CD14-positive monocyte (primary cell): ENCODE measurements at regions of chr7 and their contacts with region 1.

Region 1: DNA sequence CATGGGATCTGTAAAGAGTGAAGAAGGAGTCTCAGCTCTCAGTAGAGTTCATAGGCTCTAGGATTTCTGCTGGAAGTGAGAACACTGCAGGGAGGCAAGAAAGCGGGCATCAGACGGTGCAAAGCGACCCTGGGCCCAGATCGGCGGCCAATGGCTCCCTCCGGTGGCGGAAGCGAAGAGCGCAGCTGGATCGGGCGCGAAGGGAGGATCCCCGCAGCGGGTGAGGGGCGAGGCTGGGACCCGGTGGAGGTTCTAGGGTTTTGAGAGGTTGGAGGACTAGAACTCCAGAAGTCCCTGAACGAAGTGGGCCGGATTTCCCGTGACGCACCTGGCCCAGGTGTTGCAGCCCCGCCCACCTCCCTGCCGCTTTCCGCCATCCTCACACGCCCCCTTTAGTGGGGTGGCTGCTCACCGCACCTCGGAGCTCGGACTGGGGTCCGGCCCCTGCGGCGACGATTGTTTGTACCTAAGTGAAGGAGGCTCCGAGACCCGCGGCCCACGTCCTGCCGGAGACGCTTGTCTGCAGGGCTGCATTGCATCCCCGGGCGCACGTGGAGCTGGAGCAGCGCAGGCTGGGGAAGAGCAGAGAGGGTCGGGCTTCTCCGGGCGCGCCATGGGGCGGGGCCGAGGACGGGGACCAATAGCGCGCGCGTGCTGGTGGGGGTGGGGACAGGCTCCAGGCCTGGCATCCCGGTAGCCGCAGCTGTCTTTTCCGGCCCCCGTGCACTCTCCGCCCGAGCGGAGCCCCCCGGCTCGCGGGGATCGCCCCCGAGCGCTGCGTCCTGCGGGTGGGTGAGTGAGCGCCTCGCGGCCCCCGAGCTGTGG is at the start of gene SLC12A9:
- DNase-seq: peak; percentile 58 to 79 (median 64)
- H3K4me3 ChIP-seq: peak within 1 kb of the TSS; percentile 53 to 99 (median 69)
- H3K4me3 Mint-ChIP-seq: peak within 1 kb of the TSS; percentile 94 to 96
- H3K27ac ChIP-seq: peak within 1 kb of the TSS; percentile 48 to 84
- H3K27ac Mint-ChIP-seq: peak within 1 kb of the TSS; percentile 85 to 94 (median 92)
- H3K4me1 ChIP-seq: peaks cover 25 to 41% of the 10 kb centered on the region in 2 donors
- H3K4me1 Mint-ChIP-seq: peaks cover 38% of the 10 kb centered on the region
- H3K27me3 ChIP-seq: peaks cover 0 to 2% of the 10 kb centered on the region in 2 donors
- H3K27me3 Mint-ChIP-seq: peaks cover 0 to 3% (median 0%) of the 10 kb centered on the region in 3 donors
- CTCF ChIP-seq: peak; percentile 96
- polyA plus RNA-seq, gene SLC12A9: 18.8 to 119 (median 19.3) TPM

Region 2: DNA sequence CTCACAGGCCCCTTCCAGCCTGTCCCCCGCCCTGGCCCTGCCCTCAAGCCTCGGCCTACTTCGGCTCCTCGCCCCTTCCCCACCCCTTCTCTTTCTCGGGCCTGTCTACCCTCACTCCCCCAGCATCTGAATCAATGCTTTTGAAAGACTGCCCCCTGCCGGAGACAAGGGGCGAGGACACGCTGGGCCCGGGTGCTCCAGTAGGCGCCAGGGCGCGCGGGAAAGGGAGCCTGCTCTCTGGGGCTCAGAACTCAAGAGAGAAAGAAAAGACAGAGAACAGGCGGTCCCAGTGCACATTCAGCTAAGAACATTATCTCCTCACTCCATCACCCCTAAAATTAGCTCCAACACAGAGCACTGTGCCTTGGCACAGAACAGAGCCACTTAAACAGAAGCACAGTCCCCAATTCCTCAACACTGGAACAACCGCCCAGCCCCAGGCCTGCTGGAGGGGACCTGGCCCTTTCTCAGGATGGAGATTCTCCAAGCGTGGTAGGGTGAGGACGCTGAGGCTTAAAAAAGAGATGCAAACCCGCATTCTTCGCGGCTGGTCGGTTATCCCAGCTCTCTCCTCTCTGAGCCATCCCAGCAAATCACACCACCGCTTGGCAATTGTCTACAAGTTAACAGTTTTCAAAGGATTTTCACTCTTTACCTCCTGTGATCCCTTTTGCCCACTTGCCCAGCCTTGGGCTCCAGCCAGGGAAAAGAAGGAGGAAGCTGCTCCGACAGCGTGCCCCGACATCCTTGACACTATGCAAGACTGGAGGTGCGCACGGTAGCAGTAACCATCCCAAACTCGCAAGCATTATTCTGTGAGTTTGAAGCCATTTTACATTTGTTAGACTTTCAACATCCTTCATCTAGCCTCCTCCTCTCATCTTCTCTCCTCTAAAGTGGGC is 160.3 kb before region 1 on chr7:
- intact Hi-C with region 1: loop called in 1 of 2 experiments (anchors 5 kb)
- DNase-seq: peak; percentile 64 to 75 (median 66)
- H3K4me3 ChIP-seq: peak overlapping the region in 1 of 3 experiments; percentile 79
- H3K4me3 Mint-ChIP-seq: peak overlapping the region; percentile 94 to 98
- H3K27ac ChIP-seq: no peak overlapping the region
- H3K27ac Mint-ChIP-seq: peak overlapping the region in 1 of 7 donors; percentile 58
- H3K4me1 ChIP-seq: peaks cover 28 to 35% of the 10 kb centered on the region in 2 donors
- H3K4me1 Mint-ChIP-seq: peaks cover 23% of the 10 kb centered on the region
- H3K27me3 ChIP-seq: peaks cover 0 to 18% of the 10 kb centered on the region in 2 donors
- H3K27me3 Mint-ChIP-seq: peaks cover 12 to 18% (median 15%) of the 10 kb centered on the region in 3 donors
- CTCF ChIP-seq: peak; percentile 82

Region 3: GRCh38 chr7:100705753-100706671 is 146.2 kb before region 1 on chr7 and contains the start of gene POP7:
- intact Hi-C with region 1: loop called in 1 of 2 experiments (anchors 5 kb)
- DNase-seq: peak; percentile 96
- H3K4me3 ChIP-seq: peak within 1 kb of the TSS; percentile 67 to 95 (median 93)
- H3K4me3 Mint-ChIP-seq: peak within 1 kb of the TSS; percentile 94 to 96
- H3K27ac ChIP-seq: peak within 1 kb of the TSS; percentile 84 to 87
- H3K27ac Mint-ChIP-seq: peak within 1 kb of the TSS; percentile 82 to 96 (median 92)
- H3K4me1 ChIP-seq: peaks cover 16 to 23% of the 10 kb centered on the region in 2 donors
- H3K4me1 Mint-ChIP-seq: peaks cover 16% of the 10 kb centered on the region
- H3K27me3 ChIP-seq: peaks cover 0 to 3% of the 10 kb centered on the region in 2 donors
- H3K27me3 Mint-ChIP-seq: peaks cover 6 to 15% (median 10%) of the 10 kb centered on the region in 3 donors
- CTCF ChIP-seq: no peak
- polyA plus RNA-seq, gene POP7: 11.1 to 48.5 (median 41.6) TPM

Region 4: GRCh38 chr7:100719523-100720319 is 132.5 kb before region 1 on chr7:
- intact Hi-C with region 1: loop called in 1 of 2 experiments (anchors 10 kb)
- DNase-seq: no peak
- H3K4me3 ChIP-seq: no peak overlapping the region
- H3K4me3 Mint-ChIP-seq: peak overlapping the region in 1 of 2 donors; percentile 76
- H3K27ac ChIP-seq: no peak overlapping the region
- H3K27ac Mint-ChIP-seq: peak overlapping the region in 1 of 7 donors; percentile 61
- H3K4me1 ChIP-seq: no peaks in the 10 kb centered on the region
- H3K4me1 Mint-ChIP-seq: peaks cover 2% of the 10 kb centered on the region
- H3K27me3 ChIP-seq: peaks cover 24 to 34% of the 10 kb centered on the region in 2 donors
- H3K27me3 Mint-ChIP-seq: peaks cover 49 to 71% (median 51%) of the 10 kb centered on the region in 3 donors
- CTCF ChIP-seq: no peak

Region 5: GRCh38 chr7:100799014-100799896 is 53.0 kb before region 1 on chr7:
- intact Hi-C with region 1: loop called (anchors 2 kb)
- DNase-seq: peak; percentile 48 to 67 (median 49)
- H3K4me3 ChIP-seq: no peak overlapping the region
- H3K4me3 Mint-ChIP-seq: peak overlapping the region in 1 of 2 donors; percentile 24
- H3K27ac ChIP-seq: no peak overlapping the region
- H3K27ac Mint-ChIP-seq: peak overlapping the region in 1 of 7 donors; percentile 76
- H3K4me1 ChIP-seq: peaks cover 30 to 34% of the 10 kb centered on the region in 2 donors
- H3K4me1 Mint-ChIP-seq: peaks cover 35% of the 10 kb centered on the region
- H3K27me3 ChIP-seq: peaks cover 0 to 2% of the 10 kb centered on the region in 2 donors
- H3K27me3 Mint-ChIP-seq: peaks cover 8 to 17% (median 16%) of the 10 kb centered on the region in 3 donors
- CTCF ChIP-seq: peak; percentile 77